ENCODE measurements at regions of chr1 and their contacts with region 1.

Region 1: DNA sequence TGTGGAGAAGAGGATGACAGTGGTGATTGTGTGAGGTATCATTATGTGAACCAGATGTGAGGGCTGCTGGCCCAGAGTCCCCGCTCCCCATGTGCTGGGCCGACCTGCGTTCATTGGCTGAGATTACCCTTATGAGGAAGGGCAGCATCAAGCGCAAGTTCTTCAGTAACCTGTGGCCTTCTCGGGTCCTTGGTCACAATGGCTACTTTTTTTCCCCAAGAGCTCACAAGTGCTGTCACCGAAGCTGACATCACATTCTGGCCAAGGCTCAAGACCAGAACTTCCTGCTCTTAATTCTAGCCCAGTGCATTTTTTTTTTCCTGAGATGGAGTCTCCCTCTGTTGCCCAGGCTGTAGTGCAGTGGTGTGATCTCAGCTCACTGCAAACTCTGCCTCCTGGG is 262.9 kb downstream of the RHOU start:
- DNase-seq: no peak
- H3K4me3 ChIP-seq: no peak overlapping the region
- H3K27ac ChIP-seq: no peak overlapping the region
- H3K4me1 ChIP-seq: peaks cover 0 to 3% (median 0%) of the 10 kb centered on the region in 4 donors
- H3K27me3 ChIP-seq: no peaks in the 10 kb centered on the region
- CTCF ChIP-seq: no peak
- EP300 ChIP-seq: no peak
- POLR2A ChIP-seq: no peak

Region 2: DNA sequence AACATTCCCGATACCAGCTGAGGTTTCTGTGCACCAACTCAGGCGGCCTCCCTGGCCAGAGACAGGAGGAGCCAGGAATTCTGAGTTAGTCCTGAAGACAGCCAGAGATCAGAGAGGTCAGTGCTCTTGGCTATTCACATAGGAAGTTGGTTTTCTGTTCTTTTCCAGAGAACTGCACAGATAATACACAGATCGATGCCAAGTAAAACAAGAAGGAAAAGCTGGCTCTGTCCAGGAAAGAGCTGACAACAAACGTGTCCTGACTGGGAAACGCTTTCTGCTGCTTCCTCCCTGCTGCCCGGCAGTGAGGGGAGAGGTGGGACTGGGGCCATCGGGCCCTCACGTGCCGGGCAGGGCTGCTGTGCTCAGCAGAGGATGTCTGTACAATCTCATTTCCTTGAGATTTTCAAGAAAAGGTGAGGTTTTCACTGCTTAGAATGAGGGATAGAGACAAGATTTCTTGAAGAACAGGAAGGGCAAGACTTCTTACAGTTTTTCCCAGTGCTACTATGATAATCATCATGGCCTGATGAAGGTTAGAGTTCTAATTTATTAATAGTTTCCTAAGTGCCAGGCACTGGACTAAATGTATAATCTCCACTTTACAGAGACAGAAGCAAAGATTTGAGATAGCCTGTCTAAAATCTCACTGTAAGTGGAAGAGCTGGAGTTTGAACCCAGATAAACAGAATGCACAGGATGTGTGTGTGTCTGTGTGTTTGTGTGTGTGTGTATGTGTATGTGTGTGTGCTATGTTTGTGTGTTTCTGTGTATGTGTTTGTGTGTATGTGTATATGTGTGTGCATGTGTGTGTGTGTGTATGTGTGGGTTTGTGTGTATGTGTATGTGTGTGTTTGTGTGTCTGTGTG is 61.7 kb after region 1 on chr1:
- intact Hi-C with region 1: loop called (anchors 5 kb)
- DNase-seq: no peak
- H3K4me3 ChIP-seq: no peak overlapping the region
- H3K27ac ChIP-seq: peak overlapping the region; percentile 41 to 61 (median 54)
- H3K4me1 ChIP-seq: peaks cover 0 to 38% (median 31%) of the 10 kb centered on the region in 4 donors
- H3K27me3 ChIP-seq: no peaks in the 10 kb centered on the region
- CTCF ChIP-seq: no peak
- EP300 ChIP-seq: peak in 1 of 4 donors; percentile 59
- POLR2A ChIP-seq: no peak

Measured in sigmoid colon (tissue), 7 donors.